ENCODE measurements at regions of chr2 and their contacts with region 1.

Region 1: GRCh38 chr2:46461011-46461674 is 18.2 kb upstream of the TMEM247 start:
- DNase-seq: peak; percentile 79
- H3K4me3 ChIP-seq: no peak overlapping the region; a peak in 1 of 4 replicates
- H3K27ac ChIP-seq: peak overlapping the region in 1 of 2 experiments; percentile 72; a peak in 1 of 4 replicates
- H3K4me1 ChIP-seq: peaks cover 0 to 21% of the 10 kb centered on the region in 2 experiments; a peak in 1 of 4 replicates
- H3K27me3 ChIP-seq: no peaks in the 10 kb centered on the region
- CTCF ChIP-seq: peak; percentile 100
- EP300 ChIP-seq: no peak
- RAD21 ChIP-seq: peak; percentile 100

Region 2: GRCh38 chr2:45643543-45644542 is 817.3 kb before region 1 on chr2:
- CTCF ChIA-PET with region 1: interaction called, 11 read pairs
- POLR2A ChIA-PET with region 1: no interaction called
- DNase-seq: peak; percentile 98
- H3K4me3 ChIP-seq: peak overlapping the region; percentile 70 to 75
- H3K27ac ChIP-seq: no peak overlapping the region
- H3K4me1 ChIP-seq: peaks cover 0 to 10% of the 10 kb centered on the region in 2 experiments; a peak in 1 of 4 replicates
- H3K27me3 ChIP-seq: peaks cover 12% of the 10 kb centered on the region; the same call in 1 of the 2 replicates
- CTCF ChIP-seq: peak; percentile 92
- EP300 ChIP-seq: no peak
- RAD21 ChIP-seq: peak; percentile 99

Region 3: DNA sequence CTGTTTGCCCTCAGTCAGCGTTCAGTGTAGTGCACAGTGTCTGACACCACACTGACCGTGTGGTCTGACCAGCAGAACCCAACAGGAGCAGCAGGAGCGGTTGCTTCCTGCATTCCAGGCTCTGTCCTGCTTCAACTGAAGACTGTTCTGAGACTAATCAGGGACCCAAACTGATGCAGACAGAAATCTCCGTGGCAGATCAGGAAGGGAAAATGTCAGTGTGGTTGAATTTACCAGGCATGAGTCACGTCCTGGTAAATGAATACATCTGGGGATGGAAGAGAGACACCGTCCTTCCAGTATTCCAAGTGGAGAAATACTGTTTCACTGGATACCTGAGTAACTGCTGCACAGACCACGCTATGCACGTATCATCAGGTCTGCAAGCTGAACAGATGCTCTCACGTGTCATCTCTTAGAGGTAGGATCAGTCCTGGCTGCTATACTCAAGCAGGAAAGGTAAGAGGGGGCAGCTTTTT is 387.6 kb before region 1 on chr2:
- CTCF ChIA-PET with region 1: interaction called, 13 read pairs
- POLR2A ChIA-PET with region 1: no interaction called
- DNase-seq: peak; percentile 74
- H3K4me3 ChIP-seq: peak overlapping the region; percentile 37 to 56; a peak in 3 of 4 replicates
- H3K27ac ChIP-seq: peak overlapping the region; percentile 93 to 94
- H3K4me1 ChIP-seq: peaks cover 34 to 39% of the 10 kb centered on the region in 2 experiments
- H3K27me3 ChIP-seq: no peaks in the 10 kb centered on the region
- CTCF ChIP-seq: no peak
- EP300 ChIP-seq: peak; percentile 89 to 100
- RAD21 ChIP-seq: no peak; the same call in 1 of the 2 replicates

Region 4: DNA sequence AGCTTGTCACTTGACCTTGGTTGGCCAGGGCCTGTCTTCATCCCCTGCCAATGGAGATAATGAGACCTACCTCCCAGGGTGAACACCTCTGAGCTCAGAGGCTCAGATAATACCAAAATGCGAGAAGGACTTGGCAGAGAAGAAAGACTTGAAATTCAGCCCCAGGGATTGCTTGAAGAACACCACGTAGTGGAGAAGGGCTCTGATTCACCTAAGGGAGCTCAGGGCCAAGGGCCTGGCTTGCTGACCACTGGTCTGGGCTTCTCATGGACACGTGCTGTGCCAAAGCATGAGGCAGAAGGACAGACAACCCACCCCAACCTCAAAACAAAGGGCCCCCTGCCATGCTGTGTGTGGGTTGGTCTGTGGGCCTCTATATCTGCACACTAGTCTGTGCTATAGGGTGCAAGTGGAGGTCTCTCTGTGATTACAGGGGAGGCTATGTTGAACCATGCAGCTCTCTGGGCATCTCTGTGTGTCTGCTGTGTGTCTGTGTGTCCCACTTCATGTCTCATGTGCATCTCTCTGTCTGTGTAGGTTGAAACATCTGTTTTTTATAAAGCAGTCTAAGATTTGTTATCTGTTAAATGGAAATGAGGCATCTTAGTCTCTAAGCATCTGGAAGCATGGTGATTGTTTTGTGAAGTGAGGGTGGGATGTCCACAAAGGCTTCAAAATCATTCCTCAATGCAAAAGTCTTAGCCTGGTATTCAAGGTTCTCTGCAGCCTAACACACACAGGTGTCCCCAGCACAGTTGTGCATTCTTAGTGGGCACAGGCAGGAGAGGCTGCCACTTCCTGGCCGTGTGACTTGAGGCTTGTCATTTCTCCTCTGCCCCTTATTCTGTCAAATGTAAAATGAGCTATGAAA is 224.9 kb before region 1 on chr2:
- CTCF ChIA-PET with region 1: interaction called, 10 read pairs
- POLR2A ChIA-PET with region 1: no interaction called
- DNase-seq: peak; percentile 71
- H3K4me3 ChIP-seq: no peak overlapping the region
- H3K27ac ChIP-seq: peak overlapping the region in 1 of 2 experiments; percentile 93; a peak in 2 of 4 replicates
- H3K4me1 ChIP-seq: peaks cover 0 to 38% of the 10 kb centered on the region in 2 experiments; a peak in 2 of 4 replicates
- H3K27me3 ChIP-seq: no peaks in the 10 kb centered on the region
- CTCF ChIP-seq: no peak
- EP300 ChIP-seq: peak in 1 of 2 experiments; percentile 83; a peak in 1 of 4 replicates
- RAD21 ChIP-seq: peak; percentile 36

Region 5: DNA sequence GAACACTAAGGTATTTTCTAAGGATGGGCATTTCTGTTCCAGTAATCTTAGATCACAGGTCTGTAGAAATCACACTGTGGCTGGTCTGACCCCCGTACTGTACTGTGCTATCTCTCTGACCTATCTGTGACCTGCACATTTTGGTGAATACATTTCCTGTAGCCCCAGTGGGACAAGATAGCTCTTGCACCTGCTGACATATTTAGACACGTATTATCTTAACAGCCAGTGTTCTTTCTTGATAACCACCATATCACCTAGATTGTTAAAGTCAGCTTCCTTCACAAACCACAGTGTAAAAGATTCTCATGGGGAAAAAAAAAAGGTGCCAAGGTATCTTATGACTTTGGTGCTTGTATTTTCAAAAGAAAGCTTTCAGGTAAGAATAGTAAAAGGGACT is 21.6 kb before region 1 on chr2:
- CTCF ChIA-PET with region 1: interaction called, 14 read pairs
- POLR2A ChIA-PET with region 1: no interaction called
- DNase-seq: no peak
- H3K4me3 ChIP-seq: no peak overlapping the region
- H3K27ac ChIP-seq: no peak overlapping the region
- H3K4me1 ChIP-seq: peaks cover 0 to 5% of the 10 kb centered on the region in 2 experiments; a peak in 2 of 4 replicates
- H3K27me3 ChIP-seq: no peaks in the 10 kb centered on the region
- CTCF ChIP-seq: no peak
- EP300 ChIP-seq: no peak
- RAD21 ChIP-seq: no peak

Region 6: DNA sequence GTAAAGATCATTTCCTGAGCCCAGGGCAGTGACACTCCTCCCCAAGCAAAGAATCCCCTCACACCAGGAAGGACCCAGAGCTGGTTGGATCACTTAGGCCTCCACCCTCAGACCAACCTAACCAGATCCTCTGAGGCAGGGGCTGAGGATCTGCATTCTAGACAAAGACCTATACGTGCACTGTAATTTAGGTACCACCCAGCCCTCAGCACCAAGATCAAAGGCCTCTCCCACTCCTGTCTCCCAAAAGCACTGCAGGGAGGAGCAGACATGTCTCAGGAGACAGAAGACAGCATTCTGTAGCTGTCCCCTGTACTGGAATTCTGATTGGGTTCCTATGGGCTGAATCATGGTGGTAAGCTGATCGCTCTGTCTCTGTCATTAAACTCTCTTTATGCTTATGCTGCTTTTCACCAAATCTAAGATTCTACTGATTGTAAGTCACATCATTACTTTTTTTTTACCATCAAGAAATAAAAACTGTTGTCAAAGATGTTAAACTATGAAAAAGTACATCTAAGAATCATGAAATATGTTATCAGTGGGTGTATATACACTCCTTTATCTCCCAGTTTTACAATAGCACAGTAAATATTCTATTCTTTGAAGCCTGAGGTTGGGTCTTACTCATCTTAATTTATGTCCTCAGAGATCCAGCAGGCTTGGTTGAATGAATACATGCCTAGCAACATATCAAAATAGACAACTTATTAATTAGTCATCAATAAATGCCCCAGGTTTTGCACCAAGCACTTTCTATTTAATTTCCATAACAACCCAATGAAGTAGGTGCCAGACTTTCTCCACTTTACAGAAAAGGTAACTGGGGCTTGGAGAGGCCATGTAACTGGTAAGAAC is 426.1 kb after region 1 on chr2:
- CTCF ChIA-PET with region 1: interaction called, 22 read pairs
- POLR2A ChIA-PET with region 1: no interaction called
- DNase-seq: no peak
- H3K4me3 ChIP-seq: no peak overlapping the region
- H3K27ac ChIP-seq: peak overlapping the region in 1 of 2 experiments; percentile 85; a peak in 2 of 4 replicates
- H3K4me1 ChIP-seq: peaks cover 0 to 35% of the 10 kb centered on the region in 2 experiments; a peak in 2 of 4 replicates
- H3K27me3 ChIP-seq: no peaks in the 10 kb centered on the region
- CTCF ChIP-seq: no peak
- EP300 ChIP-seq: no peak; a peak in 1 of 4 replicates
- RAD21 ChIP-seq: no peak

Measured in SK-N-SH (cell line).